Activated CD4-positive, alpha-beta memory T cell treated with anti-CD3 and anti-CD28 coated beads for 36 hours (primary cell): ENCODE measurements at regions of chr15 and their contacts with region 1.

Region 1: DNA sequence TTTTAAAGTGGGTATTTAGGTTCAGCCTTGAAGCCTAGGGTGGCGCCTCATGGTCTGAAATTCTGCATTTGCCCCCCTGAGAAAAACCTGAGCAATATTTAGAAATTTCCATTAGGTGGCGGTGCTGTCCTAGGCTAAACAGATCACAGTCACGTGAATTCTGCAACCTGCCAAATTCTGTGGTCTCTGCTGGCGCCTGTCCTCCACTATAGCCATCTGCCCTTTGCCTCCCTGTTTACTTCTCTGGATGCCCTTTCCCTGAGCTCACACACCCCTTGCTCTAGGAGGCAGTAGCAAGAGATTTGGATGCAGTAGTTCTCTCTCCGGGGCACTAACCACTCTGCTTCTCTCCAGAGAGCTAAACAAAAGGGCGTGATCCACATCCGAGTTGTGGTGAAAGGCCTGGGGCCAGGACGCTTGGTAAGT is 9.1 kb downstream of the MRPS11 start:
- DNase-seq: peak; percentile 14
- H3K4me3 Mint-ChIP-seq: no peak overlapping the region
- H3K27ac Mint-ChIP-seq: no peak overlapping the region
- H3K4me1 Mint-ChIP-seq: peaks cover 7% of the 10 kb centered on the region
- H3K27me3 Mint-ChIP-seq: no peaks in the 10 kb centered on the region

Region 2: GRCh38 chr15:88546248-88547129 is 69.8 kb after region 1 on chr15 and contains the start of gene DET1:
- CTCF ChIA-PET with region 1: no interaction called
- POLR2A ChIA-PET with region 1: no interaction called
- intact Hi-C with region 1: loop called (anchors 1 kb)
- DNase-seq: peak; percentile 98
- H3K4me3 Mint-ChIP-seq: peak within 1 kb of the TSS; percentile 88
- H3K27ac Mint-ChIP-seq: peak within 1 kb of the TSS; percentile 89
- H3K4me1 Mint-ChIP-seq: peaks cover 13% of the 10 kb centered on the region
- H3K27me3 Mint-ChIP-seq: no peaks in the 10 kb centered on the region
- total RNA-seq, gene DET1: 1.9 to 2.2 TPM

Region 3: DNA sequence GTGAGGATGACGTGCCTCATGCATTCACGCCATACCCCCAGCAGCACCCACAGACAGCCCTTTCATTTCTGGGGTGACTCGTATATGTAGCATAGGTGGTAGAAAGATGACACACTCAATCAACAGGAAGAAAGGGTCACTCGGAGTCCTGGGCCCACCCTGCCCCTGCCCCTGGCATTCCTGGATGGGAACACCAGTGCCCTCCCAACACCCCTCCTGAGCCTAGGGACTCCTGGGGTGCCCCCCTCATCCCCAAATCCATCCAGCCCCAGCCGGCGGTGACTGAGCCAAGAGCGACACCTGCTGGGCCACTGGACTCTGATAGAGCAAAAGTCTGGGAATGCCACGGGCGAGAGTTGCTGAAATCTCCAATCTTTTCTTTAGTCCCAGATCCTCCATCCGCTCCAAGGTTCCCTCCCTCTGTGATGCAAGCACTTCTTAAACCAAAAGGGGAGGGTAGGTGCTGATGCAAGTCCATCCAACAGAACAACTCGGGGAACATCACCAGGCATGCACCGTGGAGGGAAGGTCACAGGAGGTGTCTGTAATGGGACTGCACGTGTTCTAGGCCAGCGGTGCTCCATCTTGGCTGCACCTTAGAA is 357.7 kb after region 1 on chr15:
- CTCF ChIA-PET with region 1: interaction called, 3 read pairs
- POLR2A ChIA-PET with region 1: no interaction called
- intact Hi-C with region 1: loop called (anchors 2 kb)
- DNase-seq: peak; percentile 29
- H3K4me3 Mint-ChIP-seq: no peak overlapping the region
- H3K27ac Mint-ChIP-seq: no peak overlapping the region
- H3K4me1 Mint-ChIP-seq: no peaks in the 10 kb centered on the region
- H3K27me3 Mint-ChIP-seq: peaks cover under 1% of the 10 kb centered on the region